PC-3 (cell line): ENCODE measurements at regions of chr1 and their contacts with region 1.

Region 1: DNA sequence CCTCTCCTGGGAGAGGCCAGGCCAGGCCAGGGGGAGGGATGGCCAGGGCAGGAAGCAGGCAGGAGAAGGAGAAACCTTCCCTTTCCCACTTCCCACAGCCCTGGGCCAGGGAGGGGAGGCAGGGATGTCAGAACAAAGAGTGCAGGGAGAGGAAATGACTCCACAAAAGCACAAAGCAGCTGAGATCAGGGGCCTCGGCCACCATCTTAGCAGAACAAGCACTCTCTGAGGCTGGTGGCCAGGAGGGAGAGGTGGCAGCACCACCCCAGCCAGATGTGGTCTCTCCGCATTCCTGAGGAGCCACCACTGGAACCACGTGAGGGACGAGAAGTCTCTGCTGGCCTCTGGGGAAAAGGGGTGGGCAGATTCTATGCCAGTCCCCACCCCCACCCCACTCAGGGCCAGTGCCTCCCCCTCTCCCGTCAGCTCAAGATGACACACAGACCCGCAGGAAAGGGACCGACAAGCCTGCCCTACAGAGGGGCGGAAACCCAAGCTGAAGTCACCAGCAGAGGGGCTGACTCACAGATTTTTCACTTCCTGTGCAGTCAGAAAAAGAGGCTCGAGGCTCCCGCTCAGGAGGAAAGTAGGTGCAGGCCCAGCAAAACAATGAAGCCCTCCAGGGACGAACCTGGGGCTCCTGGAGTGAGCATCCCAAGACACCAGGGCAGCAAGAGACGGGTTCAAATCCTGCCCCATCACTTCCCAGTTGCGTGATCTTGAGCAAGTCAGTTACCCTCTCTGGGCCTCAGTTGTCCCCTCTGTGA is 24.1 kb upstream of the ALDH4A1 start:
- DNase-seq: peak; percentile 96
- ATAC-seq: peak; percentile 70
- H3K4me3 ChIP-seq: peak overlapping the region; percentile 34; the same call in 1 of the 2 replicates
- H3K27ac ChIP-seq: peak overlapping the region; percentile 100
- H3K4me1 ChIP-seq: peaks cover 82% of the 10 kb centered on the region
- H3K27me3 ChIP-seq: no peaks in the 10 kb centered on the region
- CTCF ChIP-seq: no peak

Region 2: DNA sequence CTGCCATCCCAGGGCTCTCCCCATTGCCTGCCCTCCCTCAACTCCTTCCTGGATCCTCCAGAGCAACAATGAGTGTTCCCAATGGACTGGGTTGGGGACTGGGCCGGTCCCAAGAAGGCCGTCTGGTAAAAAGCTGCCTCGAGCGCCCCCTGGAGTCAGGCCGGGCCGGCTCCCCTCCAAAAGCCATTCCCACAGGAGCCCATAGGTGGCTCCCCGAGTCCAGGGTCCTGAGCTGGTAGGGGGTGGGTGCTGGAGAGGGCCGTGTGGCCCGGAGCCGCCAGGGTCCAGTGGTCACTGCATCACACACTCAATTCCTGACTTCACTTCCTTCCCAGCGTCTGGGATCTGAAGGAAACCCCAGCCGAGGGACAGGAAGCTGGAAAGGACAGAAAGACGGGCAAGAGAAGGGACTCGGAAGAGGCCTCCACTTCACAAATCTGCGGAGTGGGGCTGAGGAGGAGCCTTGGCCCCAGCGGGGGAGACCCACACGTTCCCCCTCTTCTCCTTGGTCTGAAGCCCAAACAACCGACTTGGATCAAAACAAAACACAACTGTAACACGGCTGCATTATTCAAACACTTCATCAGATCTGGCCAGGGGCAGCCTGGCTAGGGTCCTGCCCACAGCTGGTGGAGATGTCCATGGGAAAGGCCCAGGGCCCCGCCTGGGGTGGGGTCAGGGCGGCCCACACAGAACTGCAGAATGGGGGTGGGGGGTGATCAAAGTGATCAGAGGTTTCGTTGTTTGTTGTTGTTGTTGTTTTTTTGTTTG is 13.2 kb before region 1 on chr1:
- CTCF ChIA-PET with region 1: interaction called, 10 read pairs
- POLR2A ChIA-PET with region 1: no interaction called
- intact Hi-C with region 1: no loop called
- DNase-seq: peak; percentile 77
- ATAC-seq: peak; percentile 89
- H3K4me3 ChIP-seq: no peak overlapping the region
- H3K27ac ChIP-seq: no peak overlapping the region
- H3K4me1 ChIP-seq: peaks cover 5% of the 10 kb centered on the region
- H3K27me3 ChIP-seq: no peaks in the 10 kb centered on the region
- CTCF ChIP-seq: peak; percentile 100

Region 3: DNA sequence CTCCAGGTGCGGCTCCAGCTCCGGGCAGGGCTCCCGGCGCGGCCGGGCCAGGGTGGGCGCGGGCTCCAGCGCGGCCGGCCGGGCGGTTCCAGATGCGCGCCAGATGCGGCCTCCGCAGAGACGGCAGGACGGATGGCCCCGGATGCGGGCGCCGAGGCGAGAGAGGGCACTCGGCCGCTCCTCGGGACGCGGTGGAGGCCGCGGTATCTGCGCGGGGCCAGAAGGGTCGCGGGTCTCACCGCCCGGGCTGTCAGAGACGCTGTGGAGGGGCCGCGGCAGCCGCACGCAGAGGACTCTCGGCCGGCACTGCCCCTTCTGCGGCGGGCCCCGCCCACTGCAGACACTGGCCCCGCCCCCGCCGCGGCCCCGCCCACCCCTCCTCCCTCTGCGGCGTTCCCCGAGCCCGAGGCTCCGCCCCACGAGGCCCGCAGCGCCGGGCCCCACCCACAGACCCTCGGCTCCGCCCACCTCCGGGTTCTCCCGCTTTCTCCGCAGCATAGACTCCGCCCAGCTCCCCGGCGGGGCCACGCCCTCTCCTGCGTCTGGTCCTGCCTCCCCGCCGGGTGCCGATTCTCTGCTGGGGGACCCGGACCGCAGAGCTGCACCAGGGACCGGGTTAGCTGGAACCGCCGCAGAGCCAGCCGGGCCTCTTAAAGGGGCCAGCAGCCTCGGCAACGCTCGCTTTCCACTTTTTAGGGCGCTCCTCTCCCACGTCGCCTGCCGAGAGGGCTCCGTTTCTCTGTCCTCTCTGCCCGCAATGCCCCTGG is 30.1 kb after region 1 on chr1 and contains the start of gene IFFO2:
- CTCF ChIA-PET with region 1: interaction called, 3 read pairs
- POLR2A ChIA-PET with region 1: no interaction called
- intact Hi-C with region 1: loop called (anchors 1 kb)
- DNase-seq: peak; percentile 97
- ATAC-seq: peak; percentile 82
- H3K4me3 ChIP-seq: peak within 1 kb of the TSS; percentile 99
- H3K27ac ChIP-seq: no peak within 1 kb of the TSS; the same call in 1 of the 2 replicates
- H3K4me1 ChIP-seq: peaks cover 34% of the 10 kb centered on the region
- H3K27me3 ChIP-seq: no peaks in the 10 kb centered on the region
- CTCF ChIP-seq: no peak
- total RNA-seq, gene IFFO2: 30.7 and 55.2 TPM in 2 replicates

Region 4: DNA sequence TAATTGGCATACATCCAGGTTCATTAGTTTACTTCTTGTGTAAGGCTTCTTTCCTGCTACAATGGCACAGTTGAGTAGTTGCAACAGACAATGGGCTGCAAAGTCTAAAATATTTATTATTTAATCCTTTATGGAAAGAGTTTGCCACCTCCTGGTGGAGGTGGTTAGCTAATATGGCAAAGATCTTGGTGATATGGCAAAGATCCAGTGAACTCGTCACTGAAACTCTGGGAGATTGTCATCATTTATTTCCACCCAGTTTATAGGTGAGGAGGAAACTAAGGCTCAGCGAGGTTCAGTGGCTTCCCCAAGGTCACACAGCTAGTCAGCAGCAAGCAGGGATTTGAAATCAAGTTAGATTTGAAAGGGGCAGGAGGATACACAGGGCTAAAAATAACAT is 46.0 kb after region 1 on chr1:
- CTCF ChIA-PET with region 1: no interaction called
- POLR2A ChIA-PET with region 1: no interaction called
- intact Hi-C with region 1: loop called (anchors 1 kb)
- DNase-seq: peak; percentile 82
- ATAC-seq: peak; percentile 38
- H3K4me3 ChIP-seq: no peak overlapping the region
- H3K27ac ChIP-seq: no peak overlapping the region
- H3K4me1 ChIP-seq: peaks cover 22% of the 10 kb centered on the region
- H3K27me3 ChIP-seq: no peaks in the 10 kb centered on the region
- CTCF ChIP-seq: peak; percentile 54

Region 5: DNA sequence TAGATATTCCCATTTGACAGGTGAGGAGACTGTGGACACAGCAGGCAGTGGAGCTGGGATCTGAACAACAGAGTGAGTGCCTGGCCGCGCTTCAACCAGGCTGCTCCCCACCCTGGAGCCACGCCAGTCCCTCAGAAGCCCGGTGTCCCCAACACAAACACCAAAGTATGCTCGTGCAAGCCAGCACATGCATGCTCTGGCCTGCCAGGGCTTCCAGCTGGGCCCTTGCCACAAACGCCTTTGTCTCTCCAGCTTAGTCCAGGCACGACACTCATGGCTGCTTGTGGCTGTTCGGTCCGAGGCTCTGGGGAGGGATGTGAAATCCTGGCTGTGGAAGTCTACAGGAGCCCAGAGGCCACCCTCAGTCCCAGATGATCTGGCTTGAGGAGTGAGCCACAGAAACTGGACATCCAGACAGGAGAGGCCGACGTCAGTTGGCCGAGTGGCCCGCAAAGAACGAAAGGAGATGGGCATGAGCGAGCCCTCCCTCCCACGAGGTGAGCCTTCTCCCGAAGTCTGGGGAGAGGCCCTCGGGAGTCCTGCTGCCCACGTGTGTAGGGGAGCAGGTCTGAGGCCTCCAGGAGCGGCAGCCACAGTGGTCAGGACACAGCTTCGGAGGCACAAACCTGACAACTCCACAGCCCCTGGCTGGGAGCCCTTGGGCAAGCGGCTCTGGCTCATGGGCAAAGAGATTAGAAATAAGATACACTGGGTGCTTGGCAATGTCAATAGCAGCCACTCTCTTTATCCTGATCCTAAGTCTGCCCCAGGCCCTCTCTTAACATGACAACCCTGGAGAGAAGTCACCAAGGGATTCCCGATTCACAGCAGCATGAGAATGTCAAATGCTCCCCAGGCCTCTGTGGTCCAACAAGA is 147.1 kb after region 1 on chr1:
- CTCF ChIA-PET with region 1: no interaction called
- POLR2A ChIA-PET with region 1: interaction called, 11 read pairs
- intact Hi-C with region 1: no loop called
- DNase-seq: no peak
- ATAC-seq: no peak
- H3K4me3 ChIP-seq: no peak overlapping the region
- H3K27ac ChIP-seq: no peak overlapping the region
- H3K4me1 ChIP-seq: 0 out of 2 replicates have a peak, but pooled peaks cover 5% of the 10 kb centered on the region
- H3K27me3 ChIP-seq: no peaks in the 10 kb centered on the region
- CTCF ChIP-seq: no peak